K562 (cell line): ENCODE measurements at regions of chr4 and their contacts with region 1.

Region 1: GRCh38 chr4:12734586-12734985 is 749.6 kb downstream of the RAB28 start:
- DNase-seq: no peak
- ATAC-seq: no peak
- H3K4me3 ChIP-seq: no peak overlapping the region
- H3K27ac ChIP-seq: no peak overlapping the region
- H3K4me1 ChIP-seq: no peaks in the 10 kb centered on the region
- H3K27me3 ChIP-seq: no peaks in the 10 kb centered on the region
- CTCF ChIP-seq: no peak
- EP300 ChIP-seq: no peak
- POLR2A ChIP-seq: no peak
- RAD21 ChIP-seq: no peak

Region 2: GRCh38 chr4:12519426-12519825 is 215.2 kb before region 1 on chr4:
- CTCF ChIA-PET with region 1: no interaction called
- POLR2A ChIA-PET with region 1: no interaction called
- in situ Hi-C with region 1: no loop called
- intact Hi-C with region 1: no loop called
- DNase-seq: no peak
- ATAC-seq: no peak
- H3K4me3 ChIP-seq: no peak overlapping the region
- H3K27ac ChIP-seq: no peak overlapping the region
- H3K4me1 ChIP-seq: no peaks in the 10 kb centered on the region
- H3K27me3 ChIP-seq: no peaks in the 10 kb centered on the region
- CTCF ChIP-seq: no peak
- EP300 ChIP-seq: no peak
- POLR2A ChIP-seq: no peak
- RAD21 ChIP-seq: no peak

Region 3: GRCh38 chr4:12897954-12898353 is 163.4 kb after region 1 on chr4:
- CTCF ChIA-PET with region 1: no interaction called
- POLR2A ChIA-PET with region 1: no interaction called
- in situ Hi-C with region 1: no loop called
- intact Hi-C with region 1: no loop called
- DNase-seq: no peak
- ATAC-seq: no peak
- H3K4me3 ChIP-seq: no peak overlapping the region
- H3K27ac ChIP-seq: no peak overlapping the region
- H3K4me1 ChIP-seq: no peaks in the 10 kb centered on the region
- H3K27me3 ChIP-seq: no peaks in the 10 kb centered on the region
- CTCF ChIP-seq: no peak
- EP300 ChIP-seq: no peak
- POLR2A ChIP-seq: no peak
- RAD21 ChIP-seq: no peak

Region 4: DNA sequence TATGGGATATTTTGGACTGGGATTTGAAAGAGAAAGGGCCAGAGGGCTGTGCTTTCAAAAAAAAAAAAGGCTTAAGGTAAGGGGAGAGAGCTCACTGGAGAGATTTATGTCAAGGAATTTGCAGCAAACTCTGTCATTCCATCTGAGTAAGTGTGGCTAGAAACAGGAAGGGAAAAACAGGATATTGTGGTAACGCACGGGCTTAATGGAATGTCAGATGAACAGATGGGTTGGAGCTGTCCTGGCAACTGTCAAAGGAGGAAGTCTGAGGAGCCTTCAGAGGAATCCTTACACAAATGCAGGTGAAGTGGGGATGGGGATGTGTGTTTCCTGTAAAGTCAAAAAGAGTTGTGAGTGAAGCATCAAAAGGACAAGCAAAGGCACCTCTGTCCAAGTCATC is 824.8 kb after region 1 on chr4:
- CTCF ChIA-PET with region 1: no interaction called
- POLR2A ChIA-PET with region 1: no interaction called
- in situ Hi-C with region 1: loop called (anchors 10 kb)
- intact Hi-C with region 1: no loop called
- DNase-seq: no peak
- ATAC-seq: no peak
- H3K4me3 ChIP-seq: no peak overlapping the region
- H3K27ac ChIP-seq: no peak overlapping the region
- H3K4me1 ChIP-seq: no peaks in the 10 kb centered on the region
- H3K27me3 ChIP-seq: no peaks in the 10 kb centered on the region
- CTCF ChIP-seq: no peak
- EP300 ChIP-seq: no peak
- POLR2A ChIP-seq: no peak
- RAD21 ChIP-seq: no peak